ENCODE measurements at regions of chr6 and their contacts with region 1.

Region 1: DNA sequence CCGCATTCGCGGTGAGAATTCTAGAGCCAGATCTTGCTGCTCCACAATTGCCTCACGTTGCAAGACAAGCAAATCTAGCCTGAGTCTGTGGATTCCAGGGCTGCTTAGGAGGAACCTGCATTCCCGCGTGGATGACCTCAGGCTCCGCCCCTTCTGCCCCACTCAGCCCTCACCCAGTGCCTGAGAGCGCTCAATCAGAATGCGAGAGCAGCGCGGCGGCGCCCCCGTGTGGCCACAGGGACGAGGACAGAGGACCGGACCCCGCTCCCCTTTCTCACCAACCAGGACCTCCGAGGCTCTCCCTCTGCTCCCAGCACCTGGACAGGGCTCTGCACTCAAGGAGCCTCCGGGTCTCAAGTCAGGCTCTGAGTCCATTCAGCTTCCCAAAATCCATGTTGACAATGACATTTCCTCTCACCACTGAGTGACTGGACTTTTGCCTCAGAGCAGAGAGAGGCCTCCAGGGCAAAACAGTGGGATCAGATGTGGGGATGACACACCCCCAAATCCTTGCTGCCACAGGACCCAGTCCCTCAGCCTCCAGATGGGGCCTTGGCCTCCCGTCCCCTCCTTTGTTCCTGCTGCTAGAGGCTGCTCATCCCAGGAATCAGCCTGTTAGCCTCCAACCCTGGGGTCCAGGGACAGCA is 52.0 kb downstream of the RPP21 start:
- DNase-seq: peak; percentile 93
- H3K4me3 Mint-ChIP-seq: no peak overlapping the region
- H3K27ac Mint-ChIP-seq: no peak overlapping the region
- H3K4me1 Mint-ChIP-seq: no peaks in the 10 kb centered on the region
- H3K27me3 Mint-ChIP-seq: peaks cover 65% of the 10 kb centered on the region
- CTCF ChIP-seq: peak; percentile 96

Region 2: GRCh38 chr6:30219244-30219643 is 177.7 kb before region 1 on chr6:
- CTCF ChIA-PET with region 1: interaction called, 5 read pairs
- intact Hi-C with region 1: loop called (anchors 1 kb)
- DNase-seq: peak; percentile 78
- H3K4me3 Mint-ChIP-seq: no peak overlapping the region
- H3K27ac Mint-ChIP-seq: no peak overlapping the region
- H3K4me1 Mint-ChIP-seq: peaks cover 24% of the 10 kb centered on the region
- H3K27me3 Mint-ChIP-seq: no peaks in the 10 kb centered on the region
- CTCF ChIP-seq: peak; percentile 85

Region 3: DNA sequence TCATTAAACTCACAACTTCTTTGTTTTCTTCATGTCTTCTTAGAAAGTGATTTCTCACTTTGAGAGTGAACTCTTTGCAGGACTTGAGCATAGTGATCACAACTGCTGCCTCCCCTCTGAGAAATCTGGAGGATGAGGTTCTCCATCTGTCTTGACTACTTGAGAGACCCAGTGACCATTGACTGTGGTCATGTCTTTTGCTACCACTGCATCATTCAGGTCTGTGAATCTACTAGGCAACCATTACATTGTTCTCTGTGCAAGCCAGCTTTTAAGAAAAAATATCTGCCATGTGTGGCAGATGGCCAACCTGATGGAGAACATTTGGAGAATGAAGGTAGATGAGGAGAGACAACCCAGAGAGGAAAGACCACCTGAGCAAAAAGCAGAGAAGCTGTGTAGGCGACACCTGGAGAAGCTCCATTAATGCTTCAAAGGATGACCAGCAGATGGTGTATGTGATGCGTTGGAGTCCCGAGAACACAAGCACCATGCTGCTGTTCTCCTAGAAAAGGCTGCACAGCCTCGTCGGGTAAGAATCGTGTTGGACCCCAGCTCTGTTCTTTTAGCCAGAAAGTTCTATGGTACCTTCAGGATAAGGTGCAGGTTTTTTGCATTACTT is 158.7 kb before region 1 on chr6:
- CTCF ChIA-PET with region 1: interaction called, 9 read pairs
- intact Hi-C with region 1: loop called (anchors 2 kb)
- DNase-seq: peak; percentile 49
- H3K4me3 Mint-ChIP-seq: no peak overlapping the region
- H3K27ac Mint-ChIP-seq: no peak overlapping the region
- H3K4me1 Mint-ChIP-seq: no peaks in the 10 kb centered on the region
- H3K27me3 Mint-ChIP-seq: peaks cover 87% of the 10 kb centered on the region
- CTCF ChIP-seq: peak; percentile 29

Region 4: GRCh38 chr6:30357678-30358540 is 39.0 kb before region 1 on chr6:
- CTCF ChIA-PET with region 1: interaction called, 3 read pairs
- intact Hi-C with region 1: loop called (anchors 2 kb)
- DNase-seq: peak; percentile 61
- H3K4me3 Mint-ChIP-seq: peak overlapping the region; percentile 62
- H3K27ac Mint-ChIP-seq: no peak overlapping the region
- H3K4me1 Mint-ChIP-seq: peaks cover 7% of the 10 kb centered on the region
- H3K27me3 Mint-ChIP-seq: peaks cover 58% of the 10 kb centered on the region
- CTCF ChIP-seq: peak; percentile 70

Measured in Calu3 (cell line).